Heart right ventricle (tissue), 16 donors: ENCODE measurements at regions of chr4 and their contacts with region 1.

Region 1: DNA sequence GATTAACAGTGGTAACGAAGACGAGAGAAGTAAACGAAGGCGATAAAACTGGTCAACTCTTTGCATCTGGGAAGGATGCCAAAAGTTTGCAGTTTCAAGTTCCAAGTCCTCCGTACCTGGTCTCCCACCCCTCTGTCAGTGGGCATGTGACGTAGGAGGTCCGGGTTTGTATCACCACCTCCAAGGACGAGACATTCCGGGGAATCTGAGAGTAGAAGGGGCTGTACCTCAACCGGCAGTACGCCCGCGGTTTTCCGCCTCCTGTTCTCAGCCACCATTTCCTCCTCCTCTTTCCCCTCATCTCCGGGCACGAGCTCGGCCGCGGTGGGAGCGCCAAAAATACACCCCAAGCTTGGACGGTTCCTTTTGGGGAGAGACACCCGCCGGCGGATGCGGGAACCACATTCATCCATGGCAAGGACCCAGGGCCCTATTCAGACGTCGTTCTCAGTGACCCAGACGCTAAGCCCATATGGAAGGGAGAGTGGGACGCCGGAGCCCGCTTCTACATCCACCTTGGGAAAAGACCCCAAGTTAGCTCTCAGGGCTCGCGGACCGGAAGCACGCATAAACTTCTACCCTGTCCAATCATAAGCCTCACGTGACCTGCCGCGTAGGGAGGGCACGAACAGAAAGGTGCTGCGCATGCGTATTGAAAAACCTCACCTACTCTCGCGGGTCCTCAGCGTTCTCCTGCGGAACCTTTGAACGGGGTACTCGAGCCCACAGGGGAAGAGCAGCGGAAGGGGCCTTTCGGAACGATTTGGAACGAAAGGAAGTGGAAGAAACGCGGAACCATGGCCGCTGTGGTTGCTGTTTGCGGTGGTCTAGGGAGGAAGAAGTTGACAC is at the starts of genes HELQ and MRPS18C:
- DNase-seq: peak; percentile 90 to 98
- ATAC-seq: peak; percentile 99 to 100 (median 100)
- H3K4me3 ChIP-seq: peak within 1 kb of the TSS; percentile 65 to 89 (median 78)
- H3K27ac ChIP-seq: peak within 1 kb of the TSS; percentile 91 to 99 (median 96)
- H3K4me1 ChIP-seq: peaks cover 0 to 33% (median 24%) of the 10 kb centered on the region in 9 donors
- H3K27me3 ChIP-seq: no peaks in the 10 kb centered on the region
- CTCF ChIP-seq: peak in 4 of 9 donors; percentile 18 to 44 (median 31)
- total RNA-seq, gene HELQ: 11.6 to 15.7 (median 13.2) TPM
- total RNA-seq, gene MRPS18C: 47.7 to 81.9 (median 58.2) TPM

Region 2: DNA sequence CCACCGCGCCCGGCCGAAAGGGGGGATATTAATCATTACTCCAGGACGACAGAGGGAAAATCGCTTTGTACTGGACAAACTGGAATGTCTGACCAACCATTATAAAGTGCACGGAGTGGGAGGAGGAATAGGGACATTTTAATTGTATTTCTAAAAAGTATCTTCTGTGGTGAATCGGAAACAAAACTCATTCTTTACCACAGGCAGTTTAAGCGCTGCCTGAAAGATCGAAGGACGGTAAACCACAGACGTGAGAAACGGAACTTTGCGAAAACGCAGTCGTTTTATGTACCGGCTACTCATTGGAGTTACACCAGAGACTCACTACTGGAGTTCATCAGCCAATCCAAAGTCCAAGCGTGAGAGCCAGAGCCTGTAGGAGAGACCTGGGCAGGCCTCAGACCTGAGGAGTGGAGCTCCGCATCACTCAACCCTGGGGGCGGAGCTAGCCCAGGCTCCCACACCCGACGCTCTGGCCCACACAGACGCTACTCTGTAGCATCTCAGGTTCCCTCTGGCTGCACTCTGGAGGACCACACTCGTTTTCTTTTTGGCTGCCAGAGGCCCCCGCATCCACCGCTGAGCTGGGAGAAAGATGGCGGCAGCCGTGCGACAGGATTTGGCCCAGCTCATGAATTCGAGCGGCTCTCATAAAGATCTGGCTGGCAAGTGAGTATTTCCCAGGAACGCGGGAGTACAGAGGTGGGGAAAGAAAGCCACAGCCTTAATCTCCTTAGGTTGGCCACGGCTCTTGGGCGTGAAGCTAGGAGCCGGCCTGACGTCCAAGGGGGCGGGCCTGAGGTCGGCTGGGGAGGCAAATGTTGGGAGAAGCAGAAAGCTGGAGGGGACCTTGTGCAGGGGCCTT is 420.6 kb before region 1 on chr4 and contains the start of gene COPS4:
- intact Hi-C with region 1: loop called in 1 of 10 experiments (anchors 10 kb)
- DNase-seq: peak; percentile 92 to 98
- ATAC-seq: peak; percentile 100
- H3K4me3 ChIP-seq: peak within 1 kb of the TSS; percentile 41 to 92 (median 67)
- H3K27ac ChIP-seq: peak within 1 kb of the TSS; percentile 62 to 95 (median 88)
- H3K4me1 ChIP-seq: peaks cover 0 to 27% (median 22%) of the 10 kb centered on the region in 9 donors
- H3K27me3 ChIP-seq: no peaks in the 10 kb centered on the region
- CTCF ChIP-seq: peak; percentile 36 to 74 (median 52)
- total RNA-seq, gene COPS4: 48.1 to 65.1 (median 57.5) TPM

Region 3: DNA sequence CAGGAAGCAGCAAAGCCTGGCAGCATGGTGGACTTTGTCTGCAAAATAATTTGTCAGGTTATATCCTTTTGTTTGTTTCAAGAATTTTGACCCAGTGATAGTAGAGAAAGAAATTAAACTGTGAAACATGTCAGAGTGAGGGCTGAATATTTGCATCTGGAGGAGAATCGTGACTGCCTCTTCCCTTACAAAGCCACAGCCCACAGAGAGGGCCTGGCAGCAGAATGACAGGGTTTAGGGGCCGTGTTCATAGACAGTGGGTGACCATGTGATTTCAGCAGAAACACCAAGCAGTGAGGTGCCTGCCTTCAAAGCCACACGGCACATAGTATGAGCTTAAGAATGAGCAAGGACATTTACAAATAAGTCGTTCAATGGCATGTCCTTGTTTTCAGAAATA is 316.6 kb before region 1 on chr4:
- intact Hi-C with region 1: no loop called
- DNase-seq: no peak
- ATAC-seq: no peak
- H3K4me3 ChIP-seq: no peak overlapping the region
- H3K27ac ChIP-seq: no peak overlapping the region
- H3K4me1 ChIP-seq: no peaks in the 10 kb centered on the region
- H3K27me3 ChIP-seq: no peaks in the 10 kb centered on the region
- CTCF ChIP-seq: no peak

Region 4: DNA sequence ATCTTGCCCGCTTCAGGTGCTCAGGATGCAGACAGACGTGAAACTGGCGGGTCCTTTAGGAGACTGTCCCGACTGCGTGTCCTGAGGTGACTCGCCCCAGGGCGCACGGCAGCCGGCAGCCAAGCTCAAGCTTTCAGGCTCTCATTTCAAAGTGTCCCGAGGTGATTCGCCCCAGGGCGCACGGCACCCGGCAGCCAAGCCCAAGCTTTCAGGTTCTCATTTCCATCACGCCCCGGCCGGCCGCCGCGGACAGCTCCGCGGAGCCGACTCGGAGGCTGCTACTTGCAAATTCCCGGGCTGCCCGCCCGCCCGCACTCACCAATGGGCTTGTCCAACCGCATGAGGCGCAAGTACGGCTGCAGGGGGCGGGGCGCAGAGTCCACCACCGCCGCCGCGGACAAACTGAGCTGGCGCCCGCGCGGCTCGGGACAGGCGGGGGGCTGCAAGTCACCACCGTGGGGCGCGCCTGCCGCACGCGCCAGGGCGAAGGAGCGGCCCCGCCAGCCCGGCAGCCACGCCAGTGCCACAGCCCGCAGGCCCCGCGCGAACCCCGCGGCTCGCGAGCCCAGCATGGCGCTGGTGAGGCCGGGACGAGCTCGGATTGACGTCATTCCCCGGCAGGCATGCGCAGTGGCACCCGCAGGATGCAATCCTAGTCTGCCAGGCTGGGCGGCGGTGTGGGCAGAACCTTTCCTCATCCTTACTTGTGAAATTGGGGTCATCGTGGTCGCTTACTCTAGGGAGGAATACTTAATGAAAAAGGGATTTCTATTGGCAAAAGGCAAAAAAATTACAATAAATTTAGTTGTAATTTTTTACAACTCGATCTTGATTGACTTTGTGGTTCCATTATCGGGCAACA is 171.1 kb before region 1 on chr4 and contains the start of gene COQ2:
- intact Hi-C with region 1: loop called in 3 of 10 experiments (anchors 10 kb)
- DNase-seq: peak; percentile 96 to 97
- ATAC-seq: peak; percentile 96 to 99 (median 98)
- H3K4me3 ChIP-seq: peak within 1 kb of the TSS; percentile 45 to 81 (median 67)
- H3K27ac ChIP-seq: peak within 1 kb of the TSS; percentile 91 to 99 (median 96)
- H3K4me1 ChIP-seq: peaks cover 0 to 36% (median 10%) of the 10 kb centered on the region in 9 donors
- H3K27me3 ChIP-seq: no peaks in the 10 kb centered on the region
- CTCF ChIP-seq: peak; percentile 14 to 65 (median 36)
- total RNA-seq, gene COQ2: 17.8 to 32.8 (median 26.5) TPM

Region 5: GRCh38 chr4:83413676-83414075 is 41.8 kb before region 1 on chr4:
- intact Hi-C with region 1: no loop called
- DNase-seq: no peak
- ATAC-seq: no peak
- H3K4me3 ChIP-seq: no peak overlapping the region
- H3K27ac ChIP-seq: no peak overlapping the region
- H3K4me1 ChIP-seq: no peaks in the 10 kb centered on the region
- H3K27me3 ChIP-seq: no peaks in the 10 kb centered on the region
- CTCF ChIP-seq: no peak

Region 6: GRCh38 chr4:85180533-85180932 is 1725.0 kb after region 1 on chr4:
- intact Hi-C with region 1: no loop called
- DNase-seq: no peak
- ATAC-seq: no peak
- H3K4me3 ChIP-seq: no peak overlapping the region
- H3K27ac ChIP-seq: no peak overlapping the region
- H3K4me1 ChIP-seq: no peaks in the 10 kb centered on the region
- H3K27me3 ChIP-seq: no peaks in the 10 kb centered on the region
- CTCF ChIP-seq: no peak